CD4-positive, alpha-beta memory T cell (primary cell): ENCODE measurements at regions of chr7 and their contacts with region 1.

Region 1: DNA sequence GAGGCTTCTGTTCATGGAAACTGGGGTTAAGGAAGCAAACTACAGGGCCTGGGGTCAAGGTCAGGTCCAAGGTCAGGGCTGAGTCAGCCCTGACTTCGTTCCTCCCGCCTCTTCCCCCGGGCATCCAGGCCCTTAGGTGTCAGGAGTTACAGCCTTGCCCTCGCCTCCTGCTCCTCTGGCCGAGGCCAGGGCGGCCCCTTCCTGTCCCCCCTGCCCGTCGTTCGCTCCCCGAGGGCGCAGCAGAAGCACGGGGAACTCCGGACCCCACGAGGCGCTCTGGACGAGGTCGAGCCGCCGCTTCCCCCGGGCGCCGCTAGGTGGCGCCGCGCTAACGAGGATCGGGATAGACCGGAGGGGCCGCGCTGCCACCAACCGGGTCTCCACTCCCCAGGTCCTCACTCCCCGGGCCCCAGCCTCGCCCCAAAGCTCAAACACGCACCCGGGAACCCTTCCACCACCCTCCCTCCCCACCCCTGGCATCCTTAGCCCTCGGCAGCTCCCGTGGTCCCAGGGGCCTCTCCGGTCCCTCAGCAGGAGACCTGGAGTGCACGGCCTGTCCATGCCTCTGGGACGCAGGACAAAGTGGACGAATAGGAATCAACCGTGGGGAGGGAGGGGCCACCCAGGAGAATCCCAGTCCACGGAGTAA is 59.2 kb upstream of the MYL10 start:
- DNase-seq: peak; percentile 62 to 71 (median 64)
- H3K4me3 ChIP-seq: no peak overlapping the region
- H3K4me3 Mint-ChIP-seq: no peak overlapping the region
- H3K27ac ChIP-seq: no peak overlapping the region
- H3K27ac Mint-ChIP-seq: no peak overlapping the region
- H3K4me1 ChIP-seq: no peaks in the 10 kb centered on the region
- H3K4me1 Mint-ChIP-seq: peaks cover 0 to 1% (median 0%) of the 10 kb centered on the region in 4 donors
- H3K27me3 ChIP-seq: no peaks in the 10 kb centered on the region
- H3K27me3 Mint-ChIP-seq: peaks cover 0 to 1% of the 10 kb centered on the region in 2 donors

Region 2: DNA sequence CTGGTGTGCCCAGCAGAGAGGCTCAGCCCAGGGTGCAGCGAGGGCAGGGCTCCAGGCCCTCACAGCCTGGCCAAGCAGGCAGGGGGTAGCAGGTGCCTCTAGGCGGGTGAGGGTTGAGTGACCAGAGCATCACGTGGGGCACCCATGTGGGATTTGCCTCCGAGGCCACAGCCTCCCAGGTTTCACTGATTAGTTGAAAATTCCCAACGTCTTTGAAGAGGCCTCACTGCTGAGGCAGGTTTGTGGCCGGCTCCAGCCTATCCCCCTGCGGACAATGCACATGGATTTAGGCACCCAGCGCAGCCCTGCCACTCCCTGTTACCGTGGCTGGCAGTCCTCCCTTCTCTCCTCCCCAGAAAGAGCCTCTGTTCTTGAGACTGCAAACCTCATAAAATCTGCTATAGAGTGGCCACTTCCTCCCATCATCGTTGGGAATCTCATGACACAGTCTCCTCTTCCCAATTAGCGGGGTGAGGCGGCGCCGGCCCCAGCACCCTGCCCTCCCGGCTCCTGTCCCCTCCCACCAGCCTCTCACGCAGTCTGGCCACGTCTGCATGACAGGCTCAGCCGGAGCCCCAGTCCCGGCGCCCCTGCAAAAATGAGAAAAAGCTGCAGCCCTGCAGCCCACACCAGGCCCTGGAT is 70.0 kb before region 1 on chr7:
- CTCF ChIA-PET with region 1: no interaction called
- POLR2A ChIA-PET with region 1: no interaction called
- intact Hi-C with region 1: no loop called
- DNase-seq: no peak
- H3K4me3 ChIP-seq: no peak overlapping the region
- H3K4me3 Mint-ChIP-seq: no peak overlapping the region
- H3K27ac ChIP-seq: no peak overlapping the region
- H3K27ac Mint-ChIP-seq: no peak overlapping the region
- H3K4me1 ChIP-seq: no peaks in the 10 kb centered on the region
- H3K4me1 Mint-ChIP-seq: no peaks in the 10 kb centered on the region
- H3K27me3 ChIP-seq: no peaks in the 10 kb centered on the region
- H3K27me3 Mint-ChIP-seq: peaks cover 5 to 7% of the 10 kb centered on the region in 2 donors

Region 3: GRCh38 chr7:101743241-101743994 is 55.1 kb after region 1 on chr7:
- CTCF ChIA-PET with region 1: interaction called, 5 read pairs
- POLR2A ChIA-PET with region 1: no interaction called
- intact Hi-C with region 1: loop called (anchors 2 kb)
- DNase-seq: peak; percentile 67 to 74 (median 70)
- H3K4me3 ChIP-seq: peak overlapping the region; percentile 17 to 49
- H3K4me3 Mint-ChIP-seq: peak overlapping the region; percentile 58 to 86 (median 80)
- H3K27ac ChIP-seq: no peak overlapping the region
- H3K27ac Mint-ChIP-seq: peak overlapping the region in 1 of 7 donors; percentile 70
- H3K4me1 ChIP-seq: peaks cover 14% of the 10 kb centered on the region
- H3K4me1 Mint-ChIP-seq: peaks cover 2 to 10% (median 6%) of the 10 kb centered on the region in 4 donors
- H3K27me3 ChIP-seq: no peaks in the 10 kb centered on the region
- H3K27me3 Mint-ChIP-seq: peaks cover 0 to 1% of the 10 kb centered on the region in 2 donors

Region 4: GRCh38 chr7:101815835-101816493 is 127.7 kb after region 1 on chr7:
- CTCF ChIA-PET with region 1: interaction called, 5 read pairs
- POLR2A ChIA-PET with region 1: no interaction called
- intact Hi-C with region 1: loop called (anchors 1 kb)
- DNase-seq: peak; percentile 75 to 78 (median 76)
- H3K4me3 ChIP-seq: peak overlapping the region in 1 of 2 donors; percentile 43
- H3K4me3 Mint-ChIP-seq: peak overlapping the region; percentile 77 to 89 (median 86)
- H3K27ac ChIP-seq: no peak overlapping the region
- H3K27ac Mint-ChIP-seq: peak overlapping the region; percentile 66 to 89 (median 81)
- H3K4me1 ChIP-seq: peaks cover 20% of the 10 kb centered on the region
- H3K4me1 Mint-ChIP-seq: peaks cover 21 to 35% (median 27%) of the 10 kb centered on the region in 4 donors
- H3K27me3 ChIP-seq: no peaks in the 10 kb centered on the region
- H3K27me3 Mint-ChIP-seq: peaks cover 2% of the 10 kb centered on the region in 2 donors

Region 5: DNA sequence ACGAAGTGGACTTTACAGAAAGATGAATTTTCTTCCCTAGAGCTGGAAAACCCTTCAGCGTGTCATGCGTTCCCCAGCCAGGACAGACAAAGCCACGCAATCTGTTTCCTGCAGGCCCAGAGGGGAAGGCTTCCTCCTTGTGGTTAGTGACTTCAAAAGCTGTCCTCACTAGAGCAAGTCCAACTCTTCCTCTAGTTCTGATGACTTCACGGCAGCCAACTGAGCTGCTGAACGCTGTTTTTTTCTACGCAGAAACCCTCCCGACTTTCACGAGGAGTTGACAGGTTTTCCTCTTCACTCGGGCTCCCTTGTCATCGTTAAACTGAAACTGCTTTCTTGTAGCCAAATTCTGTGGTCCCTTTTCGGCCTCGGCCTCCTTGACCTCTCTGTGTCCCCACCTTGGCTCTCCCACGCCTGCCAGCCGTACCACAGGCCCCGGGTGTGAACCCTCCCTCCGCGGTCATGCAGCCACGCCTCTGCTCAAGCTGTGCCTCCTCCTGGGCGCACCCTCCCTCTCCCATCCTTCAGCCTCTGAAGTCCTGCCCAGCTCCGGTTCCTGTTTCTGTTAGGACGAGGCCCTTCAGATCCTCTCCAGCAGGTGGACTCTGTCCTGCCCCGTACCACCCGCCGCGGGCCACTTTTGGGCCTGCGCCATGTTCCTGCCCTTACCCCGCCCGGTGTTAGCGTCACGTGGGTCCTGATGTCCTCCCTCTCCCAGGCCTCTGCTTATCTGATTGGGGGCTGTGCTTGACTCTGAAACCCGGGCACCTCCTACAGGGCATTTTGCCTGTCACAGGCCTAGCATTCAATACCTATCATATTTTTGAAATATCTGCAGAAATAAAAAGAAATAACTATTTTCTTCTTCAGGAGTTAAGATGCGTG is 168.4 kb after region 1 on chr7:
- CTCF ChIA-PET with region 1: interaction called, 3 read pairs
- POLR2A ChIA-PET with region 1: no interaction called
- intact Hi-C with region 1: loop called (anchors 1 kb)
- DNase-seq: peak; percentile 78 to 91 (median 80)
- H3K4me3 ChIP-seq: peak overlapping the region; percentile 44 to 61
- H3K4me3 Mint-ChIP-seq: peak overlapping the region; percentile 95 to 100 (median 97)
- H3K27ac ChIP-seq: peak overlapping the region; percentile 68
- H3K27ac Mint-ChIP-seq: peak overlapping the region; percentile 90 to 99 (median 97)
- H3K4me1 ChIP-seq: peaks cover 18% of the 10 kb centered on the region
- H3K4me1 Mint-ChIP-seq: peaks cover 22 to 47% (median 39%) of the 10 kb centered on the region in 4 donors
- H3K27me3 ChIP-seq: no peaks in the 10 kb centered on the region
- H3K27me3 Mint-ChIP-seq: no peaks in the 10 kb centered on the region

Region 6: GRCh38 chr7:102236592-102237287 is 548.4 kb after region 1 on chr7:
- CTCF ChIA-PET with region 1: interaction called, 7 read pairs
- POLR2A ChIA-PET with region 1: no interaction called
- intact Hi-C with region 1: loop called (anchors 1 kb)
- DNase-seq: peak in 4 of 5 donors; percentile 17 to 39 (median 29)
- H3K4me3 ChIP-seq: no peak overlapping the region
- H3K4me3 Mint-ChIP-seq: no peak overlapping the region
- H3K27ac ChIP-seq: no peak overlapping the region
- H3K27ac Mint-ChIP-seq: peak overlapping the region in 1 of 7 donors; percentile 60
- H3K4me1 ChIP-seq: no peaks in the 10 kb centered on the region
- H3K4me1 Mint-ChIP-seq: no peaks in the 10 kb centered on the region
- H3K27me3 ChIP-seq: no peaks in the 10 kb centered on the region
- H3K27me3 Mint-ChIP-seq: no peaks in the 10 kb centered on the region